H1 (cell line): ENCODE measurements at regions of chr6 and their contacts with region 1.

Region 1: DNA sequence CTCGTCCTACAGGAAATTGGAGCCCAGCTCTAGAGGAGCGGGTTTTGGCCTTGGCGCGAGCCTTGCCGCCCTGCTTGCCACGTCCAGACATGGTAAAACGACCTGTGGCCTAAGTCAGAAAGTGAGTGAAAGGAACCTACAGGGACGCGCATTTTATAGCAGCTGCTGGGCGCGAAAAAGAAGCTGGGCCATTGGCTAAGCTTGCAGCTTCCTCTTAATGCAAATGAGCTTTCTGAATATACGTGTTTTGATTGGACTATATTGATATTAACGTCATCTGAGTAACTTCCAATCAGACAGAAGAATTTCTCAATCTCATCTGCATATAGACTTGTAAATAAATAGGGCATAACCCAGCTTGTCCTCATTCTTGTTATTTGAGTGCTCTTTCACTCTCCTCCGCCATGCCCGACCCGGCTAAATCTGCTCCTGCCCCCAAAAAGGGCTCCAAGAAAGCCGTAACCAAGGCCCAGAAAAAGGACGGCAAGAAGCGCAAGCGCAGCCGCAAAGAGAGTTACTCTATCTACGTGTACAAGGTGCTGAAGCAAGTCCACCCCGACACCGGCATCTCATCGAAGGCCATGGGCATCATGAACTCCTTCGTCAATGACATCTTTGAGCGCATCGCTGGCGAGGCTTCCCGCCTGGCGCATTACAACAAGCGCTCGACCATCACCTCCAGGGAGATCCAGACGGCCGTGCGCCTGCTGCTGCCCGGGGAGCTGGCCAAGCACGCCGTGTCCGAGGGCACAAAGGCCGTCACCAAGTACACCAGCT is 18.9 kb downstream of the OR2B2 start:
- DNase-seq: peak; percentile 88 to 96
- H3K4me3 ChIP-seq: peak overlapping the region; percentile 94 to 99 (median 97)
- H3K27ac ChIP-seq: peak overlapping the region; percentile 95
- H3K4me1 ChIP-seq: peaks cover 3 to 9% (median 3%) of the 10 kb centered on the region in 4 experiments; a peak in 5 of 7 replicates
- H3K27me3 ChIP-seq: no peaks in the 10 kb centered on the region
- CTCF ChIP-seq: no peak
- EP300 ChIP-seq: no peak
- POLR2A ChIP-seq: peak; percentile 99 to 100
- RAD21 ChIP-seq: no peak

Region 2: DNA sequence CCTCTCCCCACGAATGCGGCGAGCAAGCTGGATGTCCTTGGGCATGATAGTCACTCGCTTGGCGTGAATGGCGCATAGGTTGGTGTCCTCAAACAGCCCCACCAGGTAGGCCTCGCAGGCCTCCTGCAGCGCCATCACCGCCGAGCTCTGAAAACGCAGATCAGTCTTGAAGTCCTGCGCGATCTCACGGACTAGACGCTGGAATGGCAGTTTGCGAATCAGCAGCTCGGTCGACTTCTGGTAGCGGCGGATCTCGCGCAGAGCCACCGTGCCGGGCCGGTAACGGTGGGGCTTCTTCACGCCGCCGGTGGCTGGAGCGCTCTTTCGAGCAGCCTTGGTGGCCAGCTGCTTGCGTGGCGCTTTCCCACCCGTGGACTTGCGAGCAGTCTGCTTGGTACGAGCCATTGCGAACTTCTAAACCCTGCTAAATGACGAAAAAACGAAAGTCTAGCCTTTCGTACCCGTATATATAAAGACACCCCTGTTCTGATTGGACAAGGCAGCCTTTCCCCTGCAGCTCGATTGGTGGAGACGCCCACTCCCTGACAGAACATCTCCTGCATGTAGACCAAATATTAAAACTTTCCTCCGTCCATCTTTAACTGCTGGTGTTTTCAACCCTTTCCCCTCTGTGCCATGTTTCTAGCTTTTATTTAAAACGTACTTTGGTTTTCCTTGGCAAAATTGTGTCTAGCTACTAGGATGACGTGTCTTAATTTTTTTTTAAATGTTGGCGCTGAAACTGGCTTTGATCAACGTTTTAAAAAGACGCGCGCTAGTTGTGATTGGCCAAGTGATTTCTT is 1696.2 kb before region 1 on chr6:
- CTCF ChIA-PET with region 1: no interaction called
- POLR2A ChIA-PET with region 1: interaction called, 21 read pairs
- DNase-seq: peak in 1 of 2 experiments; percentile 76
- H3K4me3 ChIP-seq: peak overlapping the region; percentile 85 to 98 (median 89)
- H3K27ac ChIP-seq: peak overlapping the region; percentile 82
- H3K4me1 ChIP-seq: peaks cover 0 to 1% (median 0%) of the 10 kb centered on the region in 4 experiments; a peak in 1 of 7 replicates
- H3K27me3 ChIP-seq: no peaks in the 10 kb centered on the region
- CTCF ChIP-seq: no peak
- EP300 ChIP-seq: no peak
- POLR2A ChIP-seq: peak; percentile 99
- RAD21 ChIP-seq: no peak

Region 3: DNA sequence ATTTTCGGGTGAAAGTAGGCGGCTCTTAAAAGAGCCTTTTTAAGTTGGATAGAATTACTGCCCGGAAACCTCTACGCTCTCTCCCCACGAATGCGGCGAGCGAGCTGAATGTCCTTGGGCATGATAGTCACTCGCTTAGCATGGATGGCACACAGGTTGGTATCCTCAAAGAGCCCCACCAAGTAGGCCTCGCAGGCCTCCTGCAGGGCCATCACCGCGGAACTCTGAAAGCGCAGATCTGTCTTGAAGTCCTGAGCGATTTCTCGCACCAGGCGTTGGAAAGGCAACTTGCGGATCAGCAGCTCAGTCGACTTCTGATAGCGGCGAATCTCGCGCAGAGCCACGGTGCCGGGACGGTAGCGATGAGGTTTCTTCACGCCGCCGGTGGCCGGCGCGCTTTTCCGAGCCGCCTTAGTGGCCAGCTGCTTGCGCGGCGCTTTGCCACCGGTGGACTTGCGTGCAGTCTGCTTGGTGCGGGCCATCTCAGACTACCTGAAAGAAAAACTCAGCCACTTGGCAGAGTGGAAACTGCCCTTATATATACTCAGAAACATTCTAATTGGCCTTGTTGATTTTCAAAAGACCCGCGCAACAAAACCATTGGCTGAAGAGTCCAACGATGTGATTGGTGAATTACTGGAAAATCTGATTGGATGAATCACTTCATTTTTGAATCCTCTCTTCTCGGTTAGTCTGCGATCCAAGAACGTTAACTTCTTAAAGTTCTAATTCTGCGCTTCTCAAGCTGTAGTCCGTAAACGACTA is 1622.2 kb before region 1 on chr6:
- CTCF ChIA-PET with region 1: no interaction called
- POLR2A ChIA-PET with region 1: interaction called, 16 read pairs
- DNase-seq: peak in 1 of 2 experiments; percentile 85
- H3K4me3 ChIP-seq: peak overlapping the region; percentile 73 to 97 (median 88)
- H3K27ac ChIP-seq: peak overlapping the region; percentile 93
- H3K4me1 ChIP-seq: peaks cover 0 to 10% (median 4%) of the 10 kb centered on the region in 4 experiments; a peak in 4 of 7 replicates
- H3K27me3 ChIP-seq: no peaks in the 10 kb centered on the region
- CTCF ChIP-seq: no peak
- EP300 ChIP-seq: no peak
- POLR2A ChIP-seq: peak; percentile 94 to 100
- RAD21 ChIP-seq: no peak

Region 4: DNA sequence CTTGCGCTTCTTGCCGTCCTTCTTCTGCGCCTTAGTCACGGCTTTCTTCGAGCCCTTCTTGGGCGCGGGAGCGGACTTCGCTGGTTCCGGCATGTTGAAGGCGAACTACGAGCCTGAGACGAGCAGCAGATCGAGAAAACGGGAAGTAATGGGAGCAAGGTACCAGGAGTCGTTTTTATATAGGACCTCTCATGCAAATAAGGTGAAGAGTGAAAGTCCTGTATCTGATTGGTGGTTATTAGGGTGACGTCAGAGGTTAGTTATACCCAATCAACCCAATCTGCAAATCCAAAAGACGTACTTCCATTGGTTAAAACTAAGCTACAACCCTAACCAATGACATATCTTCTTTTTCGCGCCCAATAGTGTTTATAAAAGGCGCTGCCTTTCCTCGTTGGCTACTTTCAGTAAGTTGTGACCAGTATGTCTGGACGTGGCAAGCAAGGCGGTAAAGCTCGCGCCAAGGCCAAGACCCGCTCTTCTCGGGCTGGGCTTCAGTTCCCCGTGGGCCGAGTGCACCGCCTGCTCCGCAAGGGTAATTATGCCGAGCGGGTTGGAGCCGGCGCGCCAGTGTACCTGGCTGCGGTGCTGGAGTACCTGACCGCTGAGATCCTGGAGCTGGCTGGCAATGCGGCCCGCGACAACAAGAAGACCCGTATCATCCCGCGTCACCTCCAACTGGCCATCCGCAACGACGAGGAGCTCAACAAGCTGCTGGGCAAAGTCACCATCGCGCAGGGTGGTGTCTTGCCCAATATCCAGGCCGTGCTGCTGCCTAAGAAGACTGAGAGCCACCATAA is 746.3 kb before region 1 on chr6:
- CTCF ChIA-PET with region 1: no interaction called
- POLR2A ChIA-PET with region 1: interaction called, 97 read pairs
- DNase-seq: peak; percentile 89 to 93
- H3K4me3 ChIP-seq: peak overlapping the region; percentile 60 to 86 (median 76)
- H3K27ac ChIP-seq: peak overlapping the region; percentile 98
- H3K4me1 ChIP-seq: peaks cover 0 to 11% (median 1%) of the 10 kb centered on the region in 4 experiments; a peak in 4 of 7 replicates
- H3K27me3 ChIP-seq: no peaks in the 10 kb centered on the region
- CTCF ChIP-seq: no peak
- EP300 ChIP-seq: 0 out of 3 replicates have a peak, but pooled peaks of 1 of the 2 experiments have one; percentile 16
- POLR2A ChIP-seq: peak; percentile 98 to 99
- RAD21 ChIP-seq: no peak

Region 5: GRCh38 chr6:27809939-27810767 is 83.1 kb before region 1 on chr6:
- CTCF ChIA-PET with region 1: interaction called, 11 read pairs
- POLR2A ChIA-PET with region 1: interaction called, 924 read pairs
- DNase-seq: peak in 1 of 2 experiments; percentile 78
- H3K4me3 ChIP-seq: peak overlapping the region; percentile 78 to 96 (median 89)
- H3K27ac ChIP-seq: peak overlapping the region; percentile 84
- H3K4me1 ChIP-seq: peaks cover 0 to 6% (median 3%) of the 10 kb centered on the region in 4 experiments; a peak in 4 of 7 replicates
- H3K27me3 ChIP-seq: no peaks in the 10 kb centered on the region
- CTCF ChIP-seq: peak in 1 of 3 experiments; percentile 6; a peak in 1 of 4 replicates
- EP300 ChIP-seq: no peak
- POLR2A ChIP-seq: peak; percentile 98 to 100
- RAD21 ChIP-seq: no peak

Region 6: GRCh38 chr6:27851440-27851839 is 41.8 kb before region 1 on chr6:
- CTCF ChIA-PET with region 1: no interaction called
- POLR2A ChIA-PET with region 1: interaction called, 3,039 read pairs
- DNase-seq: no peak
- H3K4me3 ChIP-seq: no peak overlapping the region
- H3K27ac ChIP-seq: no peak overlapping the region
- H3K4me1 ChIP-seq: peaks cover 0 to 6% (median 2%) of the 10 kb centered on the region in 4 experiments; a peak in 2 of 7 replicates
- H3K27me3 ChIP-seq: no peaks in the 10 kb centered on the region
- CTCF ChIP-seq: no peak
- EP300 ChIP-seq: no peak
- POLR2A ChIP-seq: no peak
- RAD21 ChIP-seq: no peak

Region 7: DNA sequence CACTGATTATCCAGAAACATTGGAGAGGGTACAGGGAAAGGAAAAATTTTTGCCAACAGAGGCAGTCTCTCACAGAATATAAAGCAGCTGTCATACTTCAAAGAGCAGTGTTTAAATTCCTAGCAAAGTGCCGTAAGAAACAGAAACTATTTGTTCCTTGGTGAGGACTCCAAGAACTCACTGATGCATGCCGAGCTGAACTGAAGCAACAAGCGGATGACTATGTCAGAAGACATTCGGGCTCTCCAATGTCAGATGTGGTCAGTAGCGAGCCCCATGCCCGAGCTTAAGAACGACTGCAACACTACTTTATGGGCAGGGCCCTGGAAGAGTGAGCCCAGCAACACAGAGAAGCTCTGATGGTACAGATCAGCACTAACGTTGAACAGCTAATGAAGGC is 118.5 kb after region 1 on chr6:
- CTCF ChIA-PET with region 1: no interaction called
- POLR2A ChIA-PET with region 1: no interaction called
- DNase-seq: no peak
- H3K4me3 ChIP-seq: no peak overlapping the region
- H3K27ac ChIP-seq: no peak overlapping the region
- H3K4me1 ChIP-seq: no peaks in the 10 kb centered on the region
- H3K27me3 ChIP-seq: no peaks in the 10 kb centered on the region
- CTCF ChIP-seq: no peak
- EP300 ChIP-seq: no peak
- POLR2A ChIP-seq: no peak
- RAD21 ChIP-seq: no peak

Region 8: DNA sequence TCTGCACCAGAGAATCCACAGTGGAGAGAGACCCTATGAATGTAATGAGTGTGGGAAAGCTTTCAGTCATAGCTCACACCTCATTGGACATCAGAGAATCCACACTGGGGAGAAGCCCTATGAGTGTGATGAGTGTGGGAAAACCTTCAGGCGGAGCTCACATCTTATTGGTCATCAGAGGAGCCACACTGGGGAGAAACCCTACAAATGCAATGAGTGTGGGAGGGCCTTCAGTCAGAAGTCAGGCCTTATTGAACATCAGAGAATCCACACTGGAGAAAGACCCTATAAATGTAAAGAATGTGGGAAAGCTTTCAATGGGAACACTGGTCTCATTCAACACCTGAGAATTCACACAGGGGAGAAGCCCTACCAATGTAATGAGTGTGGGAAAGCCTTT is 260.3 kb after region 1 on chr6:
- CTCF ChIA-PET with region 1: no interaction called
- POLR2A ChIA-PET with region 1: no interaction called
- DNase-seq: no peak
- H3K4me3 ChIP-seq: no peak overlapping the region
- H3K27ac ChIP-seq: no peak overlapping the region
- H3K4me1 ChIP-seq: no peaks in the 10 kb centered on the region
- H3K27me3 ChIP-seq: no peaks in the 10 kb centered on the region
- CTCF ChIP-seq: no peak
- EP300 ChIP-seq: no peak
- POLR2A ChIP-seq: no peak
- RAD21 ChIP-seq: no peak

Region 9: DNA sequence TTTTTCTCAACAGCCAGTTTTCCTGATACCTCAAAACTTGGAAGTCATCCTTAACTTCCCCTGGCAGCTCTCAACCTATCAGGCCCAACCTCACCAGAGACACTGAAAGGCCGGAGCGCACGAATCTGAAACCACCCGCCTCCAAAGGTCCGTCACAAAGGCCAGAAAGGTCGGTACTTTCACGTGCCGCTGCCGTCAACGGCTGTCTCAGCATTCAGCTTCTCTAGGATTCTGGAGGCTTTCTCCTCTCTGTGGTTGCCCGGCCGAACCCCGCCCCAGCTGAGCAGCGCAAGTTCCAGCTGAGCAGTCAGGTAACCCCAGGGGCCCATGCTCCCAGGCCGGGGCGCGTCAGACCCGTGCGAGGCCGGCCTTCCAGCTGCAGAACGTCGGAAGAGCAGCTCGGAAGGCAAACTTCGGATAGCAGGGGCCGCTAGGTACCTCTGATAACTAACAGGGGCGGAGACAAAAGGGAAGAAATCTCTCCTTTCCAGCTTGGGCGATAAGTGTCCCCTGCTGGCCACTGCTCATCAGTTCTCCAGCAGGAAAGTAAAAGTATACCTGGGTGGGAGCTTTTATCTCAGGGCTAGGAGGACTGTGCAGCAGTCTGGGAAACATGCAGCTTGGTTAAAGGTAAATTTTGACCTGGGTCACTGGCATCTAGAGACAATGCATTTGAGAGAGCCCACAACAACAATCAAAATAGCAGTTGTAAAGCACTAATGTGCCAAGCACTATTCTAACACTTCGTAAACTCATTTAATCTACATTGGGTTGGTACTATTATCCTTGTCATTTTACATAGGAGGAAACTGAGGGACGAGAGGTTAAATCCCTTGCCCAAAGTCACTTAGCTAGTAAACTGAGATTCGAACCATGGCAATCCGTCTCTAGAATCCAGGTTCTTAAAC is 490.2 kb after region 1 on chr6:
- CTCF ChIA-PET with region 1: no interaction called
- POLR2A ChIA-PET with region 1: no interaction called
- DNase-seq: peak; percentile 87 to 94
- H3K4me3 ChIP-seq: peak overlapping the region; percentile 52 to 68 (median 61)
- H3K27ac ChIP-seq: peak overlapping the region; percentile 41; the same call in 1 of the 2 replicates
- H3K4me1 ChIP-seq: peaks cover 0 to 3% (median 1%) of the 10 kb centered on the region in 4 experiments; a peak in 3 of 7 replicates
- H3K27me3 ChIP-seq: no peaks in the 10 kb centered on the region
- CTCF ChIP-seq: peak; percentile 33 to 61 (median 46)
- EP300 ChIP-seq: no peak; a peak in 1 of 3 replicates
- POLR2A ChIP-seq: peak; percentile 76 to 83
- RAD21 ChIP-seq: peak; percentile 53; a peak in 3 of 4 replicates